PC-3 (cell line): ENCODE measurements at regions of chr1 and their contacts with region 1.

Region 1: DNA sequence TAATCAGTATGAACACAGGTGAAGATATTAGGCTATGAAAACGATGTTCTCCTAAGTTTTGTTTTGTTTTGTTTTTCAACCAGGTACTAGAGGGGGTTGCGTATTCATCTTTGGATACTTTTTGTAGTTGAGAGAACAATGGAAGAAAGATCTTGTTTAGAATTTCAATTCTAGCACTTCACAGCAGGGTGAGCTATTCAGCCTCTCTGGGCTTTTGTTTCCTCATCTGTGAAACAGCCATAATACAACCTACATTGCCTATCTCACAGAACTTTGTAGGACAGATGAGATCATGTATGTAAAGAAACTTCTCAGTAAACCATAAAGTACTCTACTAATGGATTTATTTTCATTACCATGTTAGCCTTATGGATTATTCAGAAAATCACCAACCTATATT is 199.5 kb downstream of the GPATCH2 start:
- DNase-seq: peak; percentile 64
- ATAC-seq: peak; percentile 81
- H3K4me3 ChIP-seq: no peak overlapping the region
- H3K27ac ChIP-seq: no peak overlapping the region
- H3K4me1 ChIP-seq: no peaks in the 10 kb centered on the region
- H3K27me3 ChIP-seq: no peaks in the 10 kb centered on the region
- CTCF ChIP-seq: peak; percentile 64

Region 2: GRCh38 chr1:217528271-217528670 is 96.9 kb after region 1 on chr1:
- CTCF ChIA-PET with region 1: no interaction called
- POLR2A ChIA-PET with region 1: no interaction called
- intact Hi-C with region 1: loop called (anchors 5 kb)
- DNase-seq: peak; percentile 75
- ATAC-seq: peak; percentile 39; the same call in 1 of the 2 replicates
- H3K4me3 ChIP-seq: no peak overlapping the region
- H3K27ac ChIP-seq: peak overlapping the region; percentile 16
- H3K4me1 ChIP-seq: peaks cover 36% of the 10 kb centered on the region
- H3K27me3 ChIP-seq: no peaks in the 10 kb centered on the region
- CTCF ChIP-seq: no peak

Region 3: DNA sequence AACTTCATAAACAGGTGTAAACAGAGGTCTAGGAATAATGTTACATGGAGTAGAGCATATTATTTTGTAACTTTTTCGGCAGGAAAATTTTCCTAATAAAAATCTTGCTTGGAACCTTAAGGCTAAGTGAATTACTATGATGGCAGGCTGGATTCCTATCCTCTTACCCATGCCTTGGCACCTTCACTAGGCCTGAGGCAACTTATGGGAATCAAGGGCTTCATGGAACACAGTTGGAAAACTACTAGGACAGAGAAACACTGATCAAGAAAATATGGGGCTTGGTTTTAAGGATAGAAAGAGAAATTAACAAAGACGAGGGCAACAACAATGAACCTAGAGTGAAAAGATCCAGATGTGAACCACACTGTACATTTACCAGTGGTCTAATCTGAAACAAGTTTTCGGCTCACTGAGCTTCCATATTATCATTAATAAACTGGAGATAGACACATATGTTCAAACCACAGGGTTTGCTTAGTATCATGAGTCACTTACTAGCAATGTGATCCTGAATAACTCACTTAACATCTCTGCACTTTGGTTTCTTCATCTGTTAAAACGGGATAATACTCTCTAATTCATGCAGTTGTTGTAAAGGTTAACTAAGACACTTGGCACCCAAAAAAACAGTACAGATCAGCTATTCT is 131.0 kb after region 1 on chr1:
- CTCF ChIA-PET with region 1: no interaction called
- POLR2A ChIA-PET with region 1: no interaction called
- intact Hi-C with region 1: loop called (anchors 2 kb)
- DNase-seq: peak; percentile 97
- ATAC-seq: peak; percentile 97
- H3K4me3 ChIP-seq: peak overlapping the region; percentile 52
- H3K27ac ChIP-seq: peak overlapping the region; percentile 71
- H3K4me1 ChIP-seq: peaks cover 28% of the 10 kb centered on the region
- H3K27me3 ChIP-seq: no peaks in the 10 kb centered on the region
- CTCF ChIP-seq: no peak

Region 4: GRCh38 chr1:217579582-217579981 is 148.2 kb after region 1 on chr1:
- CTCF ChIA-PET with region 1: no interaction called
- POLR2A ChIA-PET with region 1: no interaction called
- intact Hi-C with region 1: loop called (anchors 1 kb)
- DNase-seq: peak; percentile 25
- ATAC-seq: peak; percentile 61
- H3K4me3 ChIP-seq: no peak overlapping the region
- H3K27ac ChIP-seq: no peak overlapping the region
- H3K4me1 ChIP-seq: peaks cover 7% of the 10 kb centered on the region
- H3K27me3 ChIP-seq: no peaks in the 10 kb centered on the region
- CTCF ChIP-seq: peak; percentile 50

Region 5: GRCh38 chr1:217647791-217648190 is 216.4 kb after region 1 on chr1:
- CTCF ChIA-PET with region 1: no interaction called
- POLR2A ChIA-PET with region 1: no interaction called
- intact Hi-C with region 1: no loop called
- DNase-seq: peak; percentile 9
- ATAC-seq: no peak
- H3K4me3 ChIP-seq: no peak overlapping the region
- H3K27ac ChIP-seq: no peak overlapping the region
- H3K4me1 ChIP-seq: no peaks in the 10 kb centered on the region
- H3K27me3 ChIP-seq: no peaks in the 10 kb centered on the region
- CTCF ChIP-seq: no peak

Region 6: DNA sequence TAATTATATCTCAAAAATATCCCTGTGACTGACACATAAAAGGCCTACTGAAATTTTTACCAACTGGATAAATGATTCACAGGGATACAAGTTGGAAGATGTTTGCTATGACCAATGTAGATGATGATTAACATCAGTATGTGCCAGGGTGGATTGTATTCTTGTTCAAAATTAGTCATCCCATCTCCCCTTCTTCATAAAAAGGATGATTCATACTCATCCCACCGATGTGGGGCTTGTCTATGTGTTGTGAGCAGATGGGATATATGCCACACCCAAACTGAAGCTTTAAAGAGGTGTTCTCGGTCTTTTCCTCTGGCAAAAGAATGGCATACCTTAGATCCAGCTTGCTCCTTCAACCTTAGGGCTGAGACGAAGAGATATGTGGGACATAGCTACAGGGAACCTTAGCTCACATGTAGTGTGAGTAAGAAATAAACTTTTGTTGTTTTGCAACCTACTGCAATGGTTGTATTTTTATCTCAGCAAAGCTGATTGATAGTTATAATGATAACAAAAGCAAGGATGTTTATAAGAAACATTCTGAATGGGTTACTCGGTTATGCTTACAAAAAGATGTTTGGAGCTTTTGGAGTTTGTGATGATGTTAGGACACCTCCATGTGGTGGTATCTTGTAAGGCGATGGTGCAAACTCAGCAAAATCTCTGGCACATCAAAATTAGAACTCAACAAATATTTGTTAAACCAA is 229.1 kb after region 1 on chr1:
- CTCF ChIA-PET with region 1: no interaction called
- POLR2A ChIA-PET with region 1: no interaction called
- intact Hi-C with region 1: loop called (anchors 1 kb)
- DNase-seq: peak; percentile 98
- ATAC-seq: peak; percentile 93
- H3K4me3 ChIP-seq: peak overlapping the region; percentile 48; the same call in 1 of the 2 replicates
- H3K27ac ChIP-seq: peak overlapping the region; percentile 86
- H3K4me1 ChIP-seq: peaks cover 24% of the 10 kb centered on the region
- H3K27me3 ChIP-seq: no peaks in the 10 kb centered on the region
- CTCF ChIP-seq: peak; percentile 83

Region 7: GRCh38 chr1:217747156-217747769 is 315.9 kb after region 1 on chr1:
- CTCF ChIA-PET with region 1: no interaction called
- POLR2A ChIA-PET with region 1: no interaction called
- intact Hi-C with region 1: loop called (anchors 5 kb)
- DNase-seq: peak; percentile 75
- ATAC-seq: no peak; the same call in 1 of the 2 replicates
- H3K4me3 ChIP-seq: no peak overlapping the region
- H3K27ac ChIP-seq: no peak overlapping the region
- H3K4me1 ChIP-seq: no peaks in the 10 kb centered on the region
- H3K27me3 ChIP-seq: no peaks in the 10 kb centered on the region
- CTCF ChIP-seq: peak; percentile 89